Activated CD8-positive, alpha-beta T cell treated with anti-CD3 and anti-CD28 coated beads, Interleukin-2, amount 10 ng/mL, durations not matched to agents 7 days and 5 days (primary cell): ENCODE measurements at regions of chr12 and their contacts with region 1.

Region 1: GRCh38 chr12:54411391-54412241 is 7.5 kb downstream of the ITGA5 start:
- DNase-seq: peak; percentile 56
- ATAC-seq: peak; percentile 16
- H3K4me3 Mint-ChIP-seq: peak overlapping the region; percentile 54
- H3K27ac Mint-ChIP-seq: peak overlapping the region; percentile 89
- H3K4me1 Mint-ChIP-seq: peaks cover 56% of the 10 kb centered on the region
- H3K27me3 Mint-ChIP-seq: no peaks in the 10 kb centered on the region

Region 2: GRCh38 chr12:54428050-54429013 is 16.7 kb after region 1 on chr12:
- CTCF ChIA-PET with region 1: interaction called, 505 read pairs
- POLR2A ChIA-PET with region 1: interaction called, 16 read pairs
- DNase-seq: no peak
- ATAC-seq: no peak
- H3K4me3 Mint-ChIP-seq: no peak overlapping the region
- H3K27ac Mint-ChIP-seq: peak overlapping the region; percentile 48
- H3K4me1 Mint-ChIP-seq: peaks cover 44% of the 10 kb centered on the region
- H3K27me3 Mint-ChIP-seq: peaks cover 34% of the 10 kb centered on the region

Region 3: GRCh38 chr12:54452628-54453027 is 41.0 kb after region 1 on chr12:
- CTCF ChIA-PET with region 1: no interaction called
- POLR2A ChIA-PET with region 1: no interaction called
- DNase-seq: no peak
- ATAC-seq: no peak
- H3K4me3 Mint-ChIP-seq: no peak overlapping the region
- H3K27ac Mint-ChIP-seq: no peak overlapping the region
- H3K4me1 Mint-ChIP-seq: no peaks in the 10 kb centered on the region
- H3K27me3 Mint-ChIP-seq: peaks cover 20% of the 10 kb centered on the region

Region 4: GRCh38 chr12:54549774-54550451 is 138.3 kb after region 1 on chr12:
- CTCF ChIA-PET with region 1: no interaction called
- POLR2A ChIA-PET with region 1: no interaction called
- DNase-seq: no peak
- ATAC-seq: peak; percentile 16
- H3K4me3 Mint-ChIP-seq: peak overlapping the region; percentile 64
- H3K27ac Mint-ChIP-seq: no peak overlapping the region
- H3K4me1 Mint-ChIP-seq: peaks cover 13% of the 10 kb centered on the region
- H3K27me3 Mint-ChIP-seq: peaks cover 11% of the 10 kb centered on the region

Region 5: DNA sequence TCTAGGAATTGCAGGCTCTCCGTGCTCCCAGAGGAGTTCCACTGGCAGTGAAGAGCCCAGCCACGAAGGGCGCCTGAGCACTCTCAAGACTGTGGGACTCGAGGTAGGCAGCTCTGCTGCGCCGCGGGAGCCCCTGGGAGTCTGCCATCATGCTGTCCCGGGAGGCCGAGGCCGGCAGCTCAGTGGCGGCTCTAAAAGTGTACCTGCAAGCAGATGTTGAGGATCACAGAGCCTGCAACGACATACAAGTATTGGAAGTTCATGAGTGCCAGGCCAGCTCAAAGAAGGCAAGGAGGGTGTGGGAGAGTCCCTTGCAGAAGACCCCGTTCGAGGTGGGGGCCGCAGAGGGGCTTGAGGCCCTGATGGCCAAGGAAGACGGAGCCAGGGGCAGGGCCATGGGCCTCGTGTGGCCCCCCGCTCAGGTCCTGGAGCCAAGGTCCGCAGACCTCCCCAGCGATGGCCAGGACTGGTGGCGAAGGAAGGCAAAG is 505.4 kb after region 1 on chr12:
- CTCF ChIA-PET with region 1: no interaction called
- POLR2A ChIA-PET with region 1: no interaction called
- DNase-seq: no peak
- ATAC-seq: no peak
- H3K4me3 Mint-ChIP-seq: no peak overlapping the region
- H3K27ac Mint-ChIP-seq: no peak overlapping the region
- H3K4me1 Mint-ChIP-seq: no peaks in the 10 kb centered on the region
- H3K27me3 Mint-ChIP-seq: no peaks in the 10 kb centered on the region